Right cardiac atrium (tissue), 5 donors: ENCODE measurements at regions of chr10 and their contacts with region 1.

Region 1: GRCh38 chr10:6667679-6668270 is 87.7 kb upstream of the PRKCQ start:
- DNase-seq: no peak
- ATAC-seq: no peak
- H3K4me3 ChIP-seq: no peak overlapping the region
- H3K27ac ChIP-seq: no peak overlapping the region
- H3K4me1 ChIP-seq: no peaks in the 10 kb centered on the region
- H3K27me3 ChIP-seq: no peaks in the 10 kb centered on the region

Region 2: DNA sequence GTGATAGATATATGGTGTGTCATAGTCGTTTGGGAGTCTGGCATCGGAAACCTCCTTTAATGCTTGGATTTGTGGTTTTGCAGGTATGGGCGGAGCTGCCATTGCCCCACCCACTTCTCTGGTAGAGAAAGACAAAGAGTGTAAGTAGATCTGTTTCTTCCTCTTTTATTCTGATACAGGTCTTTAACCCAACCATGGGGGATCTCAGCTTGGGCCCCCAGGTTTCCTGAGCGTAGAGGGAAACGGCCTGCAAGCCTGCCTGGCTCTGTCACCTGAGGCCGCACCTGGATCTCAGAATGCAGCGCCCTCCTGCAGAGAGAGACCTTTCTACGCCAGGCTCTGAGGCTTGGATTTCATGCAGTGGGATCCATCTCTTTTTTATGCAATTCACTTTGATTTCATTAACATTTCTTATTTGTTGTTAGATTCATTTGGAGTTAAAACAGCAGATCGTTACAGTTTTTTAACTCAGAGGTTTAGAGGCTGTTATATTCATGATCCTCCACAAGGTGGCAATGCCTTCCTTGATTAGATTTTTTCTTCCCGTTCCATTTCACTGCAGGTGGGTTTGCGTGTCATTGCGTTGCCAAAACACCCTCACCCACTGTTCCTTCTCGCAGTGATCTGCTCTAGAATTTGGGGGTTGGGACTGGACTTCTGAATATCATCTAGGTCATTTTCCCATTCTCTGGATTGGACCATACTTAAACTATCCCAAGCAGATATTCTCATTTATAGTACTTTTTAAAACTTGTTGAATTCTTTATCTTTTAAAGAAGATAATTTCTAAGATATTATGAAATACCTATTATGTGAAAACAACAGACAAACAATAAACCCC is 559.0 kb before region 1 on chr10:
- intact Hi-C with region 1: loop called in 1 of 4 experiments (anchors 10 kb)
- DNase-seq: no peak
- ATAC-seq: peak in 1 of 2 donors; percentile 28
- H3K4me3 ChIP-seq: no peak overlapping the region
- H3K27ac ChIP-seq: no peak overlapping the region
- H3K4me1 ChIP-seq: no peaks in the 10 kb centered on the region
- H3K27me3 ChIP-seq: no peaks in the 10 kb centered on the region

Region 3: GRCh38 chr10:6987536-6987945 is 319.8 kb after region 1 on chr10:
- intact Hi-C with region 1: no loop called
- DNase-seq: no peak
- ATAC-seq: no peak
- H3K4me3 ChIP-seq: no peak overlapping the region
- H3K27ac ChIP-seq: no peak overlapping the region
- H3K4me1 ChIP-seq: no peaks in the 10 kb centered on the region
- H3K27me3 ChIP-seq: no peaks in the 10 kb centered on the region